Right ventricle myocardium inferior (tissue), 1 donor: ENCODE measurements at regions of chr1 and their contacts with region 1.

Region 1: DNA sequence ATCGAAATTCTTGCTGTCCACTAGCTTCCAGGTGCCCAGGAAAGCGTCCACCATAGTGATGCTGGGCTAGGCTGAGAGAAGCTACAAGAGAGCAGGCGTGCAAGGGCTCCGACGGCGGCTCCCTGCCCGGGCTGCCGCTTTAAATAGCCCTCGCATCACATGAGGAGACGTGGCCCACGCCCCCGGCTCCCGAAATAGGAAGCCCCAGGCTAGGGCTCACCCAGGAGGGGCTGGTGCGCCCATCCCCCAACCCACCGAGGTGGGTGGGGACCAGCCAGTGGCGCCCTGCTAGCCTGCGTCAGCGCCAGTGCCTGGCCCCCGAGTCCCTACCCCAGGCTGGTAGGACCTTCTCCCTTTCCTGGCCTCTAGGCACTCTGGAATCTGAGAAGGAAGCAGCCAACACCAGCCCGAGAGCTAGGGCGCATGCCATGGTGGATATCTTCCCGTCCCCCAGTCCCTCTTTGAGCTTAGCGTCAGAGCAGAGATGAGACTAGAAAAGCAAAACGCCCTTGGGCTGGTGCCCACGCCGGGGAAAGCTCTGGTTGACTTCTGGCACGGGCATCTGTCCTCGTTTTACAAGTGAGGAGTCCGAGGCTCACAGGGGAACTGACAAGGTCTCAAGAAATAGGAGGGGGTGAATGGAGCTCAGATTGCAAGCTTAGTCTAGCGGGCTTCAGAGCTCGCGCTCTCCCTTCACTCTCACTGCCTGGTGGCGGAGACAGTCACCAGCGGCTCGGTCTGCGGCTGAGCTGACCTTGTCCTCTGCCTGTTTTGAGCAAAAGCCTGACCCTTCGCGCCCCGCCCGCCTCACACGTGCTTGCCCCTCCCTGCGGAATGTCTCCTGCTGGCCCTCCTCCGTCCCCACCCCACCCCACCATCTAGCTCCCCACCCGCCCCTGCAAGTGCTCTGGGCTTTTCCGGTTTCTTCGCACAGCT is at the start of gene FABP3:
- DNase-seq: peak; percentile 90
- ATAC-seq: peak; percentile 78
- total RNA-seq, gene FABP3: 5,086 TPM

Region 2: GRCh38 chr1:31296486-31297276 is 76.5 kb before region 1 on chr1 and contains the starts of genes SNRNP40 and ZCCHC17:
- intact Hi-C with region 1: no loop called
- DNase-seq: peak; percentile 96
- ATAC-seq: peak; percentile 99
- total RNA-seq, gene SNRNP40: 19.0 TPM
- total RNA-seq, gene ZCCHC17: 10.4 TPM

Region 3: GRCh38 chr1:31413405-31414125 is 40.3 kb after region 1 on chr1:
- intact Hi-C with region 1: loop called (anchors 5 kb)
- DNase-seq: peak; percentile 90
- ATAC-seq: peak; percentile 85